HAP-1 (cell line): ENCODE measurements at regions of chr3 and their contacts with region 1.

Region 1: GRCh38 chr3:51501833-51502561 is 2.2 kb upstream of the DCAF1 start:
- DNase-seq: peak; percentile 61 to 89
- H3K4me3 ChIP-seq: no peak overlapping the region
- H3K4me1 ChIP-seq: no peaks in the 10 kb centered on the region; the same call in 1 of the 2 replicates
- H3K27me3 ChIP-seq: no peaks in the 10 kb centered on the region

Region 2: DNA sequence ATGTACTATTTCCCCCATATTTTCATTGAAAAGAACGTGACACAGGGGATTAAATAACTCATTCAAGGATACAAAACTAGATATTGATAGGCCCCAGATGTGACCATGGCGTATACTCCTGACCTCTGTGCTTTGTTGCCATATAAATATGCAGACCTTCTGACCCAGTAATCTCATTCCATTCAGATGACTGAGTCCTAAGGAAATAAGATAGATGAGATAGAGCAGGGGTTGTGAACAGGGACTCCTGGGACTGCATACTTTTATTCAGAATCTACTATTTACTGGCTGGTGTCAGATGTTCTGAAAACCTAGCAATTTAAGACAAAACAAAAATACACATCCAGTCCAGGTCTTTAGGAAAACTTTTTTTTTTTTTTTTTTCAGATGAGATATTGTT is 256.1 kb before region 1 on chr3:
- in situ Hi-C with region 1: no loop called
- DNase-seq: no peak
- H3K4me3 ChIP-seq: no peak overlapping the region
- H3K4me1 ChIP-seq: no peaks in the 10 kb centered on the region
- H3K27me3 ChIP-seq: no peaks in the 10 kb centered on the region

Region 3: GRCh38 chr3:51637941-51638471 is 136.0 kb after region 1 on chr3:
- in situ Hi-C with region 1: loop called (anchors 10 kb)
- DNase-seq: peak; percentile 61 to 66
- H3K4me3 ChIP-seq: no peak overlapping the region
- H3K4me1 ChIP-seq: no peaks in the 10 kb centered on the region; the same call in 1 of the 2 replicates
- H3K27me3 ChIP-seq: no peaks in the 10 kb centered on the region

Region 4: DNA sequence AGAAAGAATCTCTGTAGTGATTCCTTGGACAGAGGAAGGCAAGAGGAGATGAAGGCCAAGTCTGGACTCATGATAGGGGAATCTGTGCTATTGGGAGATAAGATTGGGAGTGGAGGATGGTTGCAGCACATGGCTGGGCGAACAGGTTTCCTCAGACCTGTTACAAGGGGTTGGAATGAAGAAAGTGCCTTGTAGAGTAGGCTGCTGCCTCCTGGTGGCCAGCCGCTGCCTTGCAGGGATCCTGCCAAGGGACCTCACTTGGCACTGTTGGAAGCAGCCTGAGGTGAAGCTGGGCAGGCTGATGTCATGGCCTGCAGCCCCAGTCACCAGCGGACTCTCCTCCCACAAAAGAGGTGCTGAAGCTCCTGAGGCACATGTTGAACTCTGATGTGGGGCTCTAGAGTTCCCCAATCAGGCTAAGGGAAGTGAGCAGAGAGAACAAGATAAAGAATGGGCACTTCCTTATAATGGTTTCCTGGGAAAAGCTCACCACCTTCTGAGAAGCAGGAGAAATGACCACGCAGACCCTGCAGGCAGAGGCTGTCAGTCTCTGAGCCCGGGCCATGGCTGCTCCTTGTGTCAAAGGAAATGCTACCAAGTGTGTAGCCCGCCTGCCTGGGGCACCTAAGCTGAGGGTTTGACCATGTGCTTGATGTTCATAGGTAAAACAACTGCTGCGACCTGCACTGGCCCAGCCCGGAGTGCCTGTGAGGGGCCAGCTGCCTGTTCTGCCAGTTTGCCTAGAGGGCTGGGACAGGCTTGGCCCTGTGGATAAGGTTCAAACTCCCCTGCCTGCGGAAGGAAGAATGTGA is 167.4 kb after region 1 on chr3:
- in situ Hi-C with region 1: loop called (anchors 5 kb)
- DNase-seq: peak; percentile 86 to 92
- H3K4me3 ChIP-seq: no peak overlapping the region
- H3K4me1 ChIP-seq: peaks cover 14% of the 10 kb centered on the region
- H3K27me3 ChIP-seq: no peaks in the 10 kb centered on the region

Region 5: DNA sequence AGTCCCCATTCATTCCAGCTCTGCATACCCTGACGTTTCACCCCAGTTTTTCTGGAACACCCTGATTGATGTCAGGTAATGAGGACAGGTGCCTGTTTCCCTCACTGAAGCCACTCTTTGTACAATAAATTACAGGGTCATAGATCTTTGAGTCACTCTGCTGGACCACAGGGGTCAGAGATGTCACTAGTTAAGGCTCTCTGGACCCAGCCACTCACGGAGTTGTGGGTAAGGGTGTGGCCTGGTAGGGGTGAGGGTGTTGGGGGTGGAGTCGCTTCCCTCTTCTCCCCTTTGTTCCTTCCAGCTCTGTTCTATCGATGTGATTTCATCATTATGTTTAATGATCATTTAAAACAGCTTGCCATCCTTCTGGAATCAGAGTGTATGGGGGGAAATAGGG is 372.9 kb after region 1 on chr3:
- in situ Hi-C with region 1: no loop called
- DNase-seq: no peak
- H3K4me3 ChIP-seq: no peak overlapping the region
- H3K4me1 ChIP-seq: no peaks in the 10 kb centered on the region
- H3K27me3 ChIP-seq: no peaks in the 10 kb centered on the region

Region 6: GRCh38 chr3:52436500-52437149 is 934.6 kb after region 1 on chr3:
- in situ Hi-C with region 1: no loop called
- DNase-seq: peak in 1 of 2 experiments; percentile 7
- H3K4me3 ChIP-seq: no peak overlapping the region
- H3K4me1 ChIP-seq: no peaks in the 10 kb centered on the region
- H3K27me3 ChIP-seq: no peaks in the 10 kb centered on the region